ENCODE measurements at regions of chr5 and their contacts with region 1.

Region 1: GRCh38 chr5:142548739-142549275 is 137.1 kb downstream of the FGF1 start:
- DNase-seq: no peak
- ATAC-seq: peak; percentile 86

Region 2: GRCh38 chr5:142000703-142001484 is 547.9 kb before region 1 on chr5:
- intact Hi-C with region 1: loop called (anchors 10 kb)
- DNase-seq: no peak
- ATAC-seq: no peak